Ovary (tissue), 10 donors: ENCODE measurements at regions of chr21 and their contacts with region 1.

Region 1: GRCh38 chr21:20760221-20760620 is 238.0 kb upstream of the NCAM2 start:
- DNase-seq: no peak
- H3K4me3 ChIP-seq: no peak overlapping the region
- H3K27ac ChIP-seq: no peak overlapping the region
- H3K4me1 ChIP-seq: no peaks in the 10 kb centered on the region
- H3K27me3 ChIP-seq: no peaks in the 10 kb centered on the region
- CTCF ChIP-seq: no peak
- EP300 ChIP-seq: no peak
- POLR2A ChIP-seq: no peak

Region 2: GRCh38 chr21:20701235-20701634 is 59.0 kb before region 1 on chr21:
- intact Hi-C with region 1: loop called in 1 of 4 experiments (anchors 10 kb)
- DNase-seq: no peak
- H3K4me3 ChIP-seq: no peak overlapping the region
- H3K27ac ChIP-seq: no peak overlapping the region
- H3K4me1 ChIP-seq: no peaks in the 10 kb centered on the region
- H3K27me3 ChIP-seq: no peaks in the 10 kb centered on the region
- CTCF ChIP-seq: no peak
- EP300 ChIP-seq: no peak
- POLR2A ChIP-seq: no peak